Natural killer cell (primary cell): ENCODE measurements at regions of chr10 and their contacts with region 1.

Region 1: DNA sequence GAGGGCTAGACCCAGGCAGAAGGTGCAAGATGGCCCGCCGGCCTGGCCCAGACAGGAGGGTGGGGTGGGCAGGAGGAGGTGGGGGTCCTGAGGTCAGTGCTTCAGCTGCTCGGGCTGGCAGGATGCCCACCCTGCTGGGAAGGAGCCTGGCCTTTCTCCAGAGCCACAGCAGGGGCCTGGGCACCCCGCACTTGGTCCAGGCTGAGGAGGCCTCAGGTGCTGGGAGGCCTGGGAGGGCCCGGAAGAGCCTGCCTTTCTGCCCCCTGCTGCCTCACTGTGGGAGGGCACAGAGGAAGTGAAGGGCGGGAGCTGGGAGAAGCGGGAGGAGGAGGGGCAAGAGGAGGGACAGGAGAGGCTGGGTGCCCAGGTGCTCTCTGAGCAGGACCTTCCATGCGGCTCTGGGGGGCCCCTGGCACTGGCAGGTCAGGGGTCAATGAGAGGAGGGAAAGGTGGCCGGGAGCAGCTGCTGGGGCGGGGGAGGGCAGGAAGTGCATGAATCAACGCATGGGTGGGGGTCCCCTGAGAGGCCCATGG is 49.7 kb downstream of the PWWP2B start:
- DNase-seq: peak; percentile 48 to 86
- ATAC-seq: peak; percentile 11 to 36 (median 11)
- H3K4me3 ChIP-seq: peak overlapping the region; percentile 12
- H3K4me3 Mint-ChIP-seq: peak overlapping the region; percentile 82
- H3K27ac ChIP-seq: peak overlapping the region; percentile 100
- H3K27ac Mint-ChIP-seq: peak overlapping the region; percentile 94 to 97
- H3K4me1 ChIP-seq: peaks cover 73% of the 10 kb centered on the region
- H3K4me1 Mint-ChIP-seq: peaks cover 16 to 64% of the 10 kb centered on the region in 2 donors
- H3K27me3 ChIP-seq: no peaks in the 10 kb centered on the region
- H3K27me3 Mint-ChIP-seq: no peaks in the 10 kb centered on the region
- CTCF ChIP-seq: peak; percentile 41

Region 2: GRCh38 chr10:132331526-132332432 is 114.9 kb before region 1 on chr10 and contains the start of gene LRRC27:
- intact Hi-C with region 1: loop called (anchors 1 kb)
- DNase-seq: peak; percentile 100
- ATAC-seq: peak; percentile 73 to 89 (median 73)
- H3K4me3 ChIP-seq: peak within 1 kb of the TSS; percentile 82
- H3K4me3 Mint-ChIP-seq: peak within 1 kb of the TSS; percentile 91
- H3K27ac ChIP-seq: peak within 1 kb of the TSS; percentile 87
- H3K27ac Mint-ChIP-seq: peak within 1 kb of the TSS; percentile 73 to 96
- H3K4me1 ChIP-seq: peaks cover 54% of the 10 kb centered on the region
- H3K4me1 Mint-ChIP-seq: peaks cover 65 to 81% of the 10 kb centered on the region in 2 donors
- H3K27me3 ChIP-seq: no peaks in the 10 kb centered on the region
- H3K27me3 Mint-ChIP-seq: peaks cover 0 to 2% of the 10 kb centered on the region in 2 donors
- CTCF ChIP-seq: no peak
- total RNA-seq, gene LRRC27: 8.1 to 22.5 (median 9.9) TPM

Region 3: GRCh38 chr10:132396495-132397035 is 50.2 kb before region 1 on chr10:
- intact Hi-C with region 1: loop called (anchors 1 kb)
- DNase-seq: peak; percentile 75 to 85
- ATAC-seq: peak; percentile 72 to 82 (median 73)
- H3K4me3 ChIP-seq: no peak overlapping the region
- H3K4me3 Mint-ChIP-seq: peak overlapping the region; percentile 37
- H3K27ac ChIP-seq: peak overlapping the region; percentile 72
- H3K27ac Mint-ChIP-seq: peak overlapping the region in 1 of 2 donors; percentile 86
- H3K4me1 ChIP-seq: peaks cover 65% of the 10 kb centered on the region
- H3K4me1 Mint-ChIP-seq: peaks cover 10 to 53% of the 10 kb centered on the region in 2 donors
- H3K27me3 ChIP-seq: no peaks in the 10 kb centered on the region
- H3K27me3 Mint-ChIP-seq: no peaks in the 10 kb centered on the region
- CTCF ChIP-seq: peak; percentile 17

Region 4: DNA sequence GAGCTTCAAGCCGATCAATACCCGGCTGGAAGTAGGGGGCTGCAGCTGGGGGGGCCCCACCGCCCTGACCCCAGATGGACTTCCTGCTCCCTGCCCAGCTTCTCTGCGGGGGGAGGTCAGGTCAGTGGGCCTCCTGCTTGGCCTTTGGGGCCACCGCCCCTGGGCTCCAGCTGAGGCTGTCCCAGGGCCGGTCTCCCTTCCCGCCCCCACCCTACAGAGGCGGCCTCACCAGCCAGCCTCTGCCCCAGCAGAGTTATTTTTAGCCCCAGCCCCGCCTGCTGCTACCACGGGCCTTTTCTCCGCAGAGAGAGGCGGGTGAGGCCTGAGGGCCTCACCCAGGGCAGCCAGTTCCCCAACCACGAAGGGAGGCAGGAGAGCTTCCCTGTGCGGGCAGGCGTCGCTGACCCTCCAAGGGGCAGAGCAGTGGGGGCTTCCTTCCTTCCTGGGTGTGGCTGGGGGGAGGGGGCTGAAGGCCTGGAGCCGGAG is 25.3 kb before region 1 on chr10:
- intact Hi-C with region 1: loop called (anchors 2 kb)
- DNase-seq: peak; percentile 49
- ATAC-seq: peak; percentile 57 to 73 (median 61)
- H3K4me3 ChIP-seq: no peak overlapping the region
- H3K4me3 Mint-ChIP-seq: peak overlapping the region; percentile 69
- H3K27ac ChIP-seq: peak overlapping the region; percentile 99
- H3K27ac Mint-ChIP-seq: peak overlapping the region; percentile 38 to 97
- H3K4me1 ChIP-seq: peaks cover 78% of the 10 kb centered on the region
- H3K4me1 Mint-ChIP-seq: peaks cover 18 to 40% of the 10 kb centered on the region in 2 donors
- H3K27me3 ChIP-seq: no peaks in the 10 kb centered on the region
- H3K27me3 Mint-ChIP-seq: no peaks in the 10 kb centered on the region
- CTCF ChIP-seq: no peak